ENCODE measurements at regions of chr12 and their contacts with region 1.

Region 1: DNA sequence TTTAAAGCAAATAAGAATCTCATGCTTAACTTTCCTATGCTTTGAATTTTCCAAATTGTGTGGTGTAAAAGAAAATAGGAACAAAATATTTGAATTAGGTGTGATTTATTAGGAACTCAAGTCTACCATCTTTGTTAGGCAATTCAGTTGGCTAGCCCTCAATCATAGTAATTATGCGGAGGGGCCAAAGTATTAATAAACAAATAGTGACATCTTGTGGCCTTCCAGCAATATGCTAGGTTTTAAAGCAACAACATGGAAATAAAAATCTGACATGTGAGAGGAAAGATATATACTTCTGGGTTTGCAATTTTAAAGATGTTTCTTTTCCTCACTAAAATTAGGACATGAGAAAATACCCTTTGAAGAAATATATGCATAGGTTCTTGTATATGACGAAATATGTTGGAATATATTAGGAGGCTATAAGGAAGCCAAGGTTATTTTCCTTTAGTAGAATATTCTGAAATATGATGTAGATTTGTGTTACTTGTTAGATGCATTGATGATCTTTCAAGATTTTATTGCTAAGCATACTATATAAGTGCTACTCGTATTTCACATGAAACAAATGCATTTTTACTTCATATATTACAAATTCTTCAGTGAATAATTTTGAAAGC is 200.4 kb downstream of the PTPRO start:
- DNase-seq: peak in 1 of 2 experiments; percentile 56
- H3K4me3 ChIP-seq: no peak overlapping the region
- H3K27ac ChIP-seq: no peak overlapping the region
- H3K4me1 ChIP-seq: 0 out of 2 replicates have a peak, but pooled peaks cover 5% of the 10 kb centered on the region
- H3K27me3 ChIP-seq: no peaks in the 10 kb centered on the region
- CTCF ChIP-seq: peak; percentile 76

Region 2: DNA sequence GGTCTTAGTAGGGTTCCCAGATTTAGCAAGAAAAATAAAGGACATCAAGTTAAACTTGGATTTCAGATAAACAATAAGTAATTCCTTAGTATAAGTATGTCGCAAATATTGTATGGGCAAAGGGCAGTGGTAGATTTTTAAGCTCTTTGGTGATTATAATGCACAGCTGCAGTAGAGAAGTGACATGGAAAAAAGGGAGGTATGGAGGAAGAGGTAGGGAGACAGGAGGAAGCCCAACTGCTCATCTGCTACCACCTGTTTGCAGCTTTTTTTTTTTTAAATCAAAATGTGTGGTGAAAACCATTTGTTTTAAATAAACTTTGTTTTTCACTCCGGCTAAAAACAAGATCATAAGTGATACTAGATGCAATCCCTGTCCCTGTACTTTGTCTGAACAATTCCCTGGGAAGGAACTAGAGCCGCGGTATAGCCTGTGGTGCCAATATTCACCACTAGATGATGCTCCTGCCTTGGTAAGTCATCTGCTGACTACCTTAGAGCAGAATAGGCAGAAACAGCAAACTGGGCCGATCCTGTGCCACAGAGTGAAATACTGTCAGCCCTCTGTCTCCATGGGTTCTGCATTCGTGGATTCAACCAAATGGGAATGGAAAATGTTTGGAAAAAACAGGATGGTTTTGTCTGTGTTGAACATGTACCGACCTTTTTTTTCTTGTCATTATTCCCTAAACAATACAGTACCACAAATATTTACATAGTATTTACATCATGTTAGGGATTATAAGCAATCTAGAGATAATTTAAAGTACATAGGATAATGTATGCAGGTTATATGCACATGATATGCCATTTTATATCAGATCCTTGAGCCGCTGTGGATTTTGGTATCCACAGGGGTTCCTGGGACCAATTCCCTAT is 892.6 kb before region 1 on chr12:
- CTCF ChIA-PET with region 1: no interaction called
- POLR2A ChIA-PET with region 1: no interaction called
- intact Hi-C with region 1: loop called (anchors 5 kb)
- DNase-seq: peak; percentile 51 to 75
- H3K4me3 ChIP-seq: no peak overlapping the region
- H3K27ac ChIP-seq: no peak overlapping the region
- H3K4me1 ChIP-seq: no peaks in the 10 kb centered on the region
- H3K27me3 ChIP-seq: no peaks in the 10 kb centered on the region
- CTCF ChIP-seq: peak; percentile 94

Region 3: DNA sequence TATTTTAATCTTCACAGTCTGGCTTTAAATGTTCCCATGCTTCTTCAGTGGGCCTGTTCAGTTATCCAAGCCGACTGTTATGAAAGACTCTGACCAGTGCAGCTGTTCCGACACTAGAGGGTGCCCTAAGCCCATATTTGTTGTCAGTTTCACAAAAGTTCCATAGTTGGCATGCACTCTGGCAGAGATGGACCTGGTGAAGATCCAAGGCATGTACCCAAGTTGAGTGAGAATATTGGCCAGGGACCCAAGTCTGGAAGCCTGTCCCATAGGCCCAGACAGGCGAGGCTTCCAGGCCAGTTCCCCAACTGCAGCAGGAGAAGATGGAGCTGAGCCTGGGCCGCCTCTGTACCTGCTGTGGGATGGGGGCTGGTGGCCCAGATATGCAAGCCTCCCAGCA is 798.9 kb before region 1 on chr12:
- CTCF ChIA-PET with region 1: no interaction called
- POLR2A ChIA-PET with region 1: no interaction called
- intact Hi-C with region 1: loop called (anchors 2 kb)
- DNase-seq: peak; percentile 36 to 50
- H3K4me3 ChIP-seq: no peak overlapping the region
- H3K27ac ChIP-seq: no peak overlapping the region
- H3K4me1 ChIP-seq: no peaks in the 10 kb centered on the region
- H3K27me3 ChIP-seq: no peaks in the 10 kb centered on the region
- CTCF ChIP-seq: peak; percentile 83

Region 4: DNA sequence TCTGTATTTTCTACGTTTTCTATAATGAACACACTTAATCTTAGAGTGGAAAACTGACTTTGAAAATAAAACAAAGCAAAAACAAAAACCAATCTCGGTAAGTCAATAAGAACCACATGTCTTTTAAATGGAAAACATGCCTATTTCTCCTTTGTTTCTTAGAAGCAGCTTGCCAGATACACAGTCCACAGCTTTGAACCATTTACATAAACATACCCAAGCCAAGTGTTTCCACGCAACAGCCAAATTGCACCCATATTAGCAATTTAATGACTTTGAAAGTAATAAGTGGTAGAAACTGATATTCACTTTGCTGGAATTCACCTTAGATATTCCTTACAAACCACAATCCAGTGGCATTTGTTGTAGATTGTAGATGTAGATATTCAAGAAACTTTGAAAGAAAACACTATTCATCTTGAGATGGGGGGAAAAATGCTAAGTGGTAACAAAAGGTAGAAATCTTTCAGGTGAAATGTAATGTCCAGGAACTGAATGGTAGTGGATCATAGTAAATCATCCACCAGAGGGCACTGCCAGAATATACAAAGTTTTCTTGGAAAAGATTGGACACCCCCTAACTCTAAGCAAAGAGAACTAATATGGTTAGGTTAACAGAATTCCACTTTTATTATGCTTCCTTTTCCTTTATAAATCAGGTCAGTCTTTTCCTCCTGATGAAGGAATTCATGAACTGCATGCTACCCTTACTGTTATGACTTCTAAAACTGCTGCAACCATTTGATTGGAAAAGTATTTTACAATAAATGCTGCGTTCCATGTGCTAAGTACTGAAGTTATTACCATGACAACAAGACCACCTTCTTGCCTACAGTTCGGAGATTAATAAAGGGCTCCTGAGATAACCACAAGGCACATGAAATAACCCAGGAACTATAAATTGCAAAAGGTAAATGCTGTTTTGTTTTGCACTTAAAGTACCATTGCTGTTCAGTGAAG is 371.2 kb before region 1 on chr12:
- CTCF ChIA-PET with region 1: interaction called, 3 read pairs
- POLR2A ChIA-PET with region 1: no interaction called
- intact Hi-C with region 1: loop called (anchors 10 kb)
- DNase-seq: no peak
- H3K4me3 ChIP-seq: no peak overlapping the region
- H3K27ac ChIP-seq: no peak overlapping the region
- H3K4me1 ChIP-seq: peaks cover 19% of the 10 kb centered on the region
- H3K27me3 ChIP-seq: no peaks in the 10 kb centered on the region
- CTCF ChIP-seq: peak; percentile 73

Region 5: GRCh38 chr12:15227004-15227679 is 295.5 kb before region 1 on chr12:
- CTCF ChIA-PET with region 1: interaction called, 3 read pairs
- POLR2A ChIA-PET with region 1: no interaction called
- intact Hi-C with region 1: loop called (anchors 5 kb)
- DNase-seq: peak in 1 of 2 experiments; percentile 25
- H3K4me3 ChIP-seq: no peak overlapping the region
- H3K27ac ChIP-seq: no peak overlapping the region
- H3K4me1 ChIP-seq: no peaks in the 10 kb centered on the region
- H3K27me3 ChIP-seq: no peaks in the 10 kb centered on the region
- CTCF ChIP-seq: peak; percentile 61

Region 6: GRCh38 chr12:15276088-15276698 is 246.5 kb before region 1 on chr12:
- CTCF ChIA-PET with region 1: interaction called, 3 read pairs
- POLR2A ChIA-PET with region 1: no interaction called
- intact Hi-C with region 1: loop called (anchors 1 kb)
- DNase-seq: peak in 1 of 2 experiments; percentile 27
- H3K4me3 ChIP-seq: no peak overlapping the region
- H3K27ac ChIP-seq: no peak overlapping the region
- H3K4me1 ChIP-seq: peaks cover 13% of the 10 kb centered on the region; the same call in 1 of the 2 replicates
- H3K27me3 ChIP-seq: no peaks in the 10 kb centered on the region
- CTCF ChIP-seq: peak; percentile 85

Region 7: DNA sequence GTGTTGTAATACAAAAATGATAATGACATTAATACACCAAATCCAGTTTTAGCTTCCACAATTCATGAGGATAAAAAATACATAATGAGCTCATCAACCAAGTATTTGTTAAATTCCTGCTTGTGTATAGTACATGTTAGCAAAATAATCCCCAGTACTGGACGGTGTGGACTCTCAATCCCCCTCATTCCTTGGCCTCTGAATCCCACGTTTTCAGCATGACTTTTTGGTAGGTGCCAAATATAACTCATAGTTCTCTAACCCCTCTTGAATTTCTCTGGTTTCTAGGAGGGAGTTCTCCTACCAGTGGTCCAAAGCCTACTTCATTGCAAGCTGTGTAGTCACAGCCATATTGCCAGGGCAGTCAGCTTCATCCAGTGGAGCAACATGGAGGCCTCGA is 307.9 kb after region 1 on chr12:
- CTCF ChIA-PET with region 1: interaction called, 14 read pairs
- POLR2A ChIA-PET with region 1: no interaction called
- intact Hi-C with region 1: no loop called
- DNase-seq: no peak
- H3K4me3 ChIP-seq: no peak overlapping the region
- H3K27ac ChIP-seq: no peak overlapping the region
- H3K4me1 ChIP-seq: peaks cover 25% of the 10 kb centered on the region
- H3K27me3 ChIP-seq: no peaks in the 10 kb centered on the region
- CTCF ChIP-seq: no peak